ENCODE measurements at regions of chr6 and their contacts with region 1.

Region 1: GRCh38 chr6:43013843-43014433 is at the starts of genes KLHDC3 and MEA1:
- DNase-seq: peak; percentile 100
- H3K4me3 ChIP-seq: peak within 1 kb of the TSS; percentile 77 to 84 (median 81)
- H3K27ac ChIP-seq: peak within 1 kb of the TSS; percentile 85 to 87 (median 86)
- H3K4me1 ChIP-seq: peaks cover 46 to 58% (median 53%) of the 10 kb centered on the region in 4 donors
- H3K27me3 ChIP-seq: no peaks in the 10 kb centered on the region
- CTCF ChIP-seq: peak in 1 of 3 experiments; percentile 20
- EP300 ChIP-seq: no peak
- POLR2A ChIP-seq: no peak
- total RNA-seq, gene KLHDC3: 88.0 to 175 (median 98.1) TPM
- total RNA-seq, gene MEA1: 51.5 to 71.2 (median 62.8) TPM

Region 2: DNA sequence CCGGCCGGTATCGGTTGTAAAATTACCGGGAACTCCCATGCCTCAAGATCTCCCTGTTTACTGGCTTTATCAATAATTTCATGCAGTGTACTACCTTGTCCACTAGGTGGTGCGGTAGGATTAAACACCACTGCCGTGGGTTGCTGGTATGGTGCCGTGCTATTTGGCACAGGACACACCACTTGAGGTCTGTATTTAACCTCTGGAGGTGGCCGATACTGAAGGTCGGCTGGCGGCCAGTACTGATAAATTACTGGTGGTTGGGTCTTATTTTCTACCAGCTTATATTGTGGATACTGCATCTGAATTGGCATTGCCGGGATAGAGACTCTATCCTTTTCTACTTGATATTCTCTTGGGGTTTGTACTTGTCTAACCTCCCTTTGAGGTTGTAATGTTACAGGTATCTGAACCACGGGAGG is 112.4 kb before region 1 on chr6:
- intact Hi-C with region 1: loop called (anchors 10 kb)
- DNase-seq: peak; percentile 94
- H3K4me3 ChIP-seq: peak overlapping the region in 1 of 4 donors; percentile 27
- H3K27ac ChIP-seq: no peak overlapping the region
- H3K4me1 ChIP-seq: peaks cover 9 to 12% (median 12%) of the 10 kb centered on the region in 4 donors
- H3K27me3 ChIP-seq: no peaks in the 10 kb centered on the region
- CTCF ChIP-seq: peak; percentile 90 to 93 (median 91)
- EP300 ChIP-seq: no peak
- POLR2A ChIP-seq: no peak

Region 3: GRCh38 chr6:43053545-43054205 is 39.7 kb after region 1 on chr6 and contains the start of gene CUL7:
- intact Hi-C with region 1: loop called (anchors 5 kb)
- DNase-seq: peak; percentile 96
- H3K4me3 ChIP-seq: peak within 1 kb of the TSS; percentile 70 to 75 (median 74)
- H3K27ac ChIP-seq: peak within 1 kb of the TSS; percentile 88 to 94 (median 92)
- H3K4me1 ChIP-seq: peaks cover 19 to 51% (median 32%) of the 10 kb centered on the region in 4 donors
- H3K27me3 ChIP-seq: no peaks in the 10 kb centered on the region
- CTCF ChIP-seq: peak in 1 of 3 experiments; percentile 6
- EP300 ChIP-seq: no peak
- POLR2A ChIP-seq: peak; percentile 18
- total RNA-seq, gene CUL7: 8.4 to 19.6 (median 14.4) TPM